Activated T-helper 1 cell treated with anti-CD3 and anti-CD28 coated beads, Interleukin-12 subunit alpha, Interleukin-12 subunit beta, Interleukin-2, Interleukin-4 antibody, amounts not matched to agents 30 ng/mL and 10 ng/mL and 1 ng/mL, durations not matched to agents 14 hours and 24 hours and 36 hours (primary cell): ENCODE measurements at regions of chr3 and their contacts with region 1.

Region 1: GRCh38 chr3:42880601-42881451 is 5.1 kb upstream of the CYP8B1 start:
- DNase-seq: peak; percentile 83
- H3K4me3 Mint-ChIP-seq: peak overlapping the region; percentile 82
- H3K27ac Mint-ChIP-seq: peak overlapping the region; percentile 59
- H3K4me1 Mint-ChIP-seq: peaks cover 16% of the 10 kb centered on the region
- H3K27me3 Mint-ChIP-seq: peaks cover 2% of the 10 kb centered on the region

Region 2: DNA sequence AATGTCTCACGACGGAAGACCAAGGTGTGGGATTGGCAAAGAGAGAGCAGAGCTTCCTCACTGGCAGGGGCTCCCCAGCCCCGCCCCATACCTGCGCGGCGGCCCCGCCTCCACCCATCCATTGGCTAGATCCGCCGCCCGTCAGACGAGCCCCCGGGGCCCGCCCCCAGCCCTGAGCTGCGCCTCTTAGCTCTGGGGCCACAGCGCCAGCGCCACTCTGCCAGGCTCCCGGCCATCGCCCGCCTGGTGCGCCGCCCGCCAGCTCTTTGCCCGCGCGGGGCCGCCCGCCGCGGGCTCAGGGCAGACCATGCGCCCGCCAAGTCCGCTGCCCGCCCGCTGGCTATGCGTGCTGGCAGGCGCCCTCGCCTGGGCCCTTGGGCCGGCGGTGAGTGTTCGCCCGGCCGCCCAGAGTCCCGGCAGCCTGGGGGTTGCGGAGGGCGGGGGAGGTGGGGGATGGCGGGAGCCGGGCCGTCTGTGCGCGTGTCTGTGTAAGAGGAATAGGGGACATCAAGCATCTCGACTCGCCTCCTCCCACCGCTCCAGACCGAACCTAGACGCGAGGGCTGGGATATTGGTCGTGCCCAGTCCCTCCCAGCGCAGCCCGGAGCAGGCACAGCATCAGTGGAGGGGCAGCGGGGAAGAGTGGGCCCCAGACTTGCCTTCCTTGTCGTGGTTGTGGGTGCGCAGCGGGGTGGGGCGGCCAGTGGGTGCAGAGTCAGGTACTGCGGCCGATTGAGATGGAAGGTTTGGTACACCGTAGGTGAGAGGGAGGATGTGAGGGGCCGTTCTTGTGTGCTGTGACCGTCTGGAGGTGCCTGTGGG is 378.2 kb before region 1 on chr3 and contains the start of gene VIPR1:
- intact Hi-C with region 1: loop called (anchors 1 kb)
- DNase-seq: peak; percentile 85
- H3K4me3 Mint-ChIP-seq: peak within 1 kb of the TSS; percentile 86
- H3K27ac Mint-ChIP-seq: no peak within 1 kb of the TSS
- H3K4me1 Mint-ChIP-seq: peaks cover 31% of the 10 kb centered on the region
- H3K27me3 Mint-ChIP-seq: peaks cover 26% of the 10 kb centered on the region
- total RNA-seq, gene VIPR1: 0.69 and 0.88 TPM in 2 replicates

Region 3: DNA sequence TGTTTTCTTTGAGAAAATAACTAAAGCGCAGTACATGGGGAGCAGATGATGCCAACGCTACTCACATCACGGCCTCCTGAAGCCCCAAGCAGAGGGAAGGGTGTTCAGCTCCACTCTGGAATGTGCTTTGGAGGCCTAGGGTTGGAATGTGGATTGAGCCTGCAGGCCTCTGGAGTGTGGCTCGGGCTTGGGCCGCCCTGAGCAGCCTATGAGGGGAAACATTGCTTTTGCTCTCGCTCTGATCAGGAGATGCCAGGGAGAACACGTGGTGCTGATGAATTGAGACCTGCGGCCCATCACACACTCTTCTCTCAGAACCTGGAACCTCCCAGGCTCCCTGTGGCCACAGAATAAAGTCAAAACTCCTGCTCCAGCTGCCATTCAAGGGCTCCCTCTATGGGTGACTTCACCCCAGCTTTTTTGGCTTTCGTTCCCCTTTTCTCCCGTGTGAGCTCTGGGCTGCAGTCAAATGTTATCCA is 131.0 kb before region 1 on chr3:
- intact Hi-C with region 1: loop called (anchors 1 kb)
- DNase-seq: no peak
- H3K4me3 Mint-ChIP-seq: no peak overlapping the region
- H3K27ac Mint-ChIP-seq: no peak overlapping the region
- H3K4me1 Mint-ChIP-seq: peaks cover 20% of the 10 kb centered on the region
- H3K27me3 Mint-ChIP-seq: peaks cover 5% of the 10 kb centered on the region

Region 4: DNA sequence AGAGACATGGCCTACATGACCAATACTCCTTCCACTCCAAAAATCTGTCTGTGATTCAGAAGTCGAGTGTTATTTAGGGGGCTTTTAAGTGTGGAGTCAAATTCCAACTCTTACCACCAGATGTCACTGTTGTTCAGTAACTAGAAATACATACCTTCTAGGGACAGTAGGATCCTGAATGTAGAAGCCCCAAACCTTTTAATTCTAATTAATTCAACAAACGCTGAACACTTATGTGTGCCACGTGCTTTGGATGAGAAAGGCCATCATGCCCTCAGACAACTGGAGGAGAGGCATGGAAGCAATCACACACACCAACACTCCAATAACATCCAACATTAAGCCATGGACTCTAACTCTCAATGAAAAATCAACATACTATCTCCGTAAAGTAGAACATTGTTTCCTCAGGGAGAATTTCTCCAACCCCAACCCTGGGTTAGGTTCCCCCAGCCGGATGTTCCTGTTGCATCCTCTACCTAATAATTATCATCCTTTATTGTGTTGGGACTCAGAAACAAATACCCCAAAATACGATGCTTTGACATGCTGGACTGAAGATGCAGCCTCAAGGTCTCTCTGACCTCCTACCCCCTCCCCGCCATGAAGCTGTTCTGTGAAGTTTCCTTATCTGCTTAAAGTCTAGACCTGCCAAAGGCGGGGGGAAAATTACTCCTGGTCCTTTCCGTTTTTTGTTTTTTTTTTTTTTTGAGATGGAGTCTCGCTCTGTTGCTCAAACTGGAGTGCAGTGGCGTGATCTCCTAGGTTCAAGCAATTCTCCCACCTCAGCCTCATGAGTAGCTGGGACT is 99.7 kb before region 1 on chr3:
- intact Hi-C with region 1: loop called (anchors 1 kb)
- DNase-seq: no peak
- H3K4me3 Mint-ChIP-seq: no peak overlapping the region
- H3K27ac Mint-ChIP-seq: no peak overlapping the region
- H3K4me1 Mint-ChIP-seq: peaks cover 6% of the 10 kb centered on the region
- H3K27me3 Mint-ChIP-seq: no peaks in the 10 kb centered on the region

Region 5: DNA sequence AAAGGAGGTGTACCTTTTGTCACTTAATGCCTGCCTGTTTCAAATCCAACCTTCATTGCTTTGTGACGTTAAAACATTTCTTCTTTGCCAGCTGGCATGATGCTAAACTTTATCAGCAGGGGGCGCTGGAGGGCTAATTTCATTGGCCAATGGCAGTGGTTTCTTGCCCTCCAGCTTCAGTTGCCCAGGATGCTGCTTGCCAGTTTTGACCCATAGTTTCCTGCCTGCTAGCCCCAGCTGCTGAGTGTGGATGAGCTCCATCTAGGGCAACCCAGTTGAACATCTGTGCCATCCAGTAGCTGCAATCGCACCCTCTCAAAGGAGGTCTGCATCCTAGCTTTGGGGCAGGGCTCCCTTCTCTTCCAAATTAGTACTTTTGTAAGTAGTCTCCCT is 49.5 kb before region 1 on chr3:
- intact Hi-C with region 1: loop called (anchors 1 kb)
- DNase-seq: peak; percentile 59
- H3K4me3 Mint-ChIP-seq: no peak overlapping the region
- H3K27ac Mint-ChIP-seq: no peak overlapping the region
- H3K4me1 Mint-ChIP-seq: peaks cover 9% of the 10 kb centered on the region
- H3K27me3 Mint-ChIP-seq: peaks cover 11% of the 10 kb centered on the region